ENCODE measurements at regions of chr10 and their contacts with region 1.

Region 1: DNA sequence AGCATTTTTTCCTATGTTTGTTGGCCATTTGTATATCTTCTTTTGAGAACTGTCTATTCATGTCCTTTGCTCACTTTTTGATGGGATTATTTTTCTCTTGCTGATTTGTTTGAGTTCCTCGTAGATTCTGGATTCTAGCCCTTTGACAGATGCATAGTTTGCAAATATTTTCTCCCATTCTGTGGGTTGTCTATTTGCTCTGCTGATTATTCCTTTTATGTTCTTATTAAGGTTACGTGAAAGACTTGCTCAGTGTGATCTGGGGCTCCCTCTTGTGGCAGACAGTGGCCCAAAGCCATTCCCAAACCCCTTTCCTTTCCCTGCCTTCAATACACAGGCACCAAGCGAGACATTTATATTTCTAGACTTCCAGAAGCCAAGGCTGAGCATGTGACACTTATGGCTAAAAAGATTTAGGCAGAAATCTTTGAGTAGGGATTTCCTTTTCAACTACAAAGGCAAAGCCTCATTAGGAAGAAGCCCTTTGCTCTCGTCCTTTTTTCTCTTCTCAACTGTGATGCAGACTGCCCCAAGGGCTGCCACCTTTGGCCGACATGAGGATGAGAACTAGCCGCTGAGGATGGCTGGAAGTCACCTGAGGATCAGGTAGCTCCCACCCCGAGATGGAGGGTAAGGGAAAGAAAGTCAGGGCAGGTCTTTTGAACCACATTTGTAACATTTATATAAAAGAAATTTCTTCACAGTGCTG is 23.6 kb downstream of the ST8SIA6 start:
- DNase-seq: peak; percentile 66 to 72 (median 71)
- ATAC-seq: peak in 3 of 4 donors; percentile 76 to 81 (median 81)
- H3K4me3 ChIP-seq: no peak overlapping the region
- H3K27ac ChIP-seq: peak overlapping the region in 1 of 12 donors; percentile 20
- H3K4me1 ChIP-seq: peaks cover 0 to 51% (median 16%) of the 10 kb centered on the region in 12 donors
- H3K27me3 ChIP-seq: peaks cover 0 to 5% (median 0%) of the 10 kb centered on the region in 9 donors
- CTCF ChIP-seq: peak; percentile 70 to 97 (median 87)
- POLR2A ChIP-seq: no peak

Region 2: GRCh38 chr10:15879058-15879457 is 1551.7 kb before region 1 on chr10:
- intact Hi-C with region 1: loop called in 1 of 10 experiments (anchors 5 kb)
- DNase-seq: no peak
- ATAC-seq: no peak
- H3K4me3 ChIP-seq: no peak overlapping the region
- H3K27ac ChIP-seq: no peak overlapping the region
- H3K4me1 ChIP-seq: peaks cover 0 to 3% (median 0%) of the 10 kb centered on the region in 12 donors
- H3K27me3 ChIP-seq: peaks cover 0 to 21% (median 0%) of the 10 kb centered on the region in 9 donors
- CTCF ChIP-seq: peak; percentile 38 to 68 (median 56)
- POLR2A ChIP-seq: no peak

Region 3: DNA sequence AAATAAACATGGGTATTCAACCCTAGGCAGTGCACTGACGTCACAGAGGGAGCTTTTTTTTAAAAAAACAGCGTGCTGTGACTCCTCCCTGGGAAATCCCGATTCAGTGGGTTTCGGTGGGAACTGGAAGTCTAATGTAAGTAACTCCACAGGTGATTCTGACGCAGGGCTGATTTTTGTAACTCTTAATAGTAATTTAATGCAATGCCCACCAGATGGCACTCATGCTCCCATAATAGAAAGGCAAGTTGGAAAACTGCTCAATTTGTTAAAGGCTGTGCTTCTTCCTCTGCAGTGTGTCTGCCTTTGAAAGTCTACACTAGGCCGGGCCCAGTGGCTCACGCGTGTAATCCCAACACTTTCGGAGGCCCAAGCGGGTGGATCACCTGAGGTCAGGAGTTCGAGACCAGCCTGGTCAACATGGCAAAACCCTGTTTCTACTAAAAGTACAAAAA is 602.7 kb before region 1 on chr10:
- intact Hi-C with region 1: loop called in 2 of 10 experiments (anchors 5 kb)
- DNase-seq: peak in 4 of 5 donors; percentile 46 to 55 (median 53)
- ATAC-seq: peak; percentile 74 to 82 (median 80)
- H3K4me3 ChIP-seq: peak overlapping the region in 5 of 12 donors; percentile 1 to 38 (median 17)
- H3K27ac ChIP-seq: peak overlapping the region in 10 of 12 donors; percentile 25 to 75 (median 49)
- H3K4me1 ChIP-seq: peaks cover 0 to 29% (median 13%) of the 10 kb centered on the region in 12 donors
- H3K27me3 ChIP-seq: no peaks in the 10 kb centered on the region
- CTCF ChIP-seq: peak; percentile 51 to 74 (median 64)
- POLR2A ChIP-seq: no peak

Region 4: GRCh38 chr10:16843252-16843870 is 587.4 kb before region 1 on chr10:
- intact Hi-C with region 1: loop called in 9 of 10 experiments (anchors 2 to 10 kb)
- DNase-seq: peak in 1 of 5 donors; percentile 19
- ATAC-seq: peak; percentile 45 to 61 (median 52)
- H3K4me3 ChIP-seq: no peak overlapping the region
- H3K27ac ChIP-seq: no peak overlapping the region
- H3K4me1 ChIP-seq: peaks cover 0 to 12% (median 0%) of the 10 kb centered on the region in 12 donors
- H3K27me3 ChIP-seq: no peaks in the 10 kb centered on the region
- CTCF ChIP-seq: peak; percentile 58 to 79 (median 68)
- POLR2A ChIP-seq: no peak

Region 5: DNA sequence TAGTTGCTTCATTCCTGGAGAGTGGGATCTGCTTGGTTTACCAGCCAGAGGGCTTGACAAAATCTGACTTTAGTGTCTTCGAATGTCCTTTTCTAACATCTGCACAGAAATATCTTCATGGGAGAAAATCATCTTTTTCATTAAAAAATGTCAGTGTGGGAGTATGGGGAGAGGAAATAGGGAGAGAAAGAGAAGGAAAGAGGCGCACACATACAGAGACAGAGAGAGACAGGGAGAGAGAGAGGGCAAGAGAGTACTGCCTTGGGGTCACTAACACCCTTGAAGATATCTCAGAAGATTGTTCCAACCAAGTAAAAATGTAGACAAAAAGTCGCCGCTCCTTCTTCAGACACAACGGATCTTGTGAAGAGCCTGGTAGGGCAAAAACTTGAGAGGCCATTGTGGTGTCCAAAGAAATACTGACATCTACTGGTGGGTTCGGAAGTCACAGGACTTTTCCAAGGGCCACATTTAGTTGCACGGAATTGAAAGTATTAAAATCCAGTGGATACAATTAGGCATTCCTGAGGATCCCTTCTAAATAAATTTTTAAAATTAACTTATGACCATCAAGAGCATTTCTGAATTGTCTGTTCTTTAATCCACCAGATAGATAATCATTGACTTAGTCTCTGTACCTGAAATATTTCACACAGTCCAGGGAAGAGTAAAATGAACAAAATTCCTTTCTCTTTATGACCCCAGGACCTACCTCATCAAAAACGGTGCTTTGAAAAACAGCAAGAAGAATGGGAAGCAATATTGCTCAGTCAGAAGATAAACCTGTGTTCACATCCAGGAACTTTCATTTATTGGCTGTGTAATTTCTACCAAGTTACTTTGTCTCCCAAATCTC is 173.1 kb before region 1 on chr10:
- intact Hi-C with region 1: loop called in 1 of 10 experiments (anchors 10 kb)
- DNase-seq: peak in 2 of 5 donors; percentile 49 to 50
- ATAC-seq: peak; percentile 73 to 87 (median 84)
- H3K4me3 ChIP-seq: peak overlapping the region in 5 of 12 donors; percentile 16 to 42 (median 24)
- H3K27ac ChIP-seq: peak overlapping the region in 1 of 12 donors; percentile 30
- H3K4me1 ChIP-seq: peaks cover 0 to 9% (median 0%) of the 10 kb centered on the region in 12 donors
- H3K27me3 ChIP-seq: no peaks in the 10 kb centered on the region
- CTCF ChIP-seq: peak; percentile 77 to 91 (median 85)
- POLR2A ChIP-seq: no peak

Region 6: DNA sequence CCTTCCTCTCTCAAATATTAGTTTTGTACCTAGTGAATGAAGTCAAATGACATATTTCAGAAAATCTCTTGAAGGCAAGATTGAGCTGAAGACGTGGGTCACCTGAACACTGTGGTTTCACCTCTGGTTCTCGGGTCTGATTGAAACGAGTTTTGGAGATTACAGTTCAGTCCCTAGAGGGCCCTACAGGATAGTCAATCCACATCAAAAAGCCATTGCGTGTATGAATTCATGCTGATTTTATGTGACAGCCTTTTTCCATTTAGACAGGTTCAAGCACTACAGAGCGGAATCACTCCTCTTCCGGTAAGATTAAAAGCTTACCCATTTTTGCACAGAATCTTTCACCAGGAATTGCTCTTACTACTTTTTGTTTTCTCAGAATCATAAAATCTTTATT is 140.6 kb before region 1 on chr10:
- intact Hi-C with region 1: loop called in 1 of 10 experiments (anchors 5 kb)
- DNase-seq: no peak
- ATAC-seq: no peak
- H3K4me3 ChIP-seq: no peak overlapping the region
- H3K27ac ChIP-seq: no peak overlapping the region
- H3K4me1 ChIP-seq: no peaks in the 10 kb centered on the region
- H3K27me3 ChIP-seq: peaks cover 0 to 4% (median 0%) of the 10 kb centered on the region in 9 donors
- CTCF ChIP-seq: peak in 4 of 12 donors; percentile 17 to 32 (median 26)
- POLR2A ChIP-seq: no peak

Region 7: DNA sequence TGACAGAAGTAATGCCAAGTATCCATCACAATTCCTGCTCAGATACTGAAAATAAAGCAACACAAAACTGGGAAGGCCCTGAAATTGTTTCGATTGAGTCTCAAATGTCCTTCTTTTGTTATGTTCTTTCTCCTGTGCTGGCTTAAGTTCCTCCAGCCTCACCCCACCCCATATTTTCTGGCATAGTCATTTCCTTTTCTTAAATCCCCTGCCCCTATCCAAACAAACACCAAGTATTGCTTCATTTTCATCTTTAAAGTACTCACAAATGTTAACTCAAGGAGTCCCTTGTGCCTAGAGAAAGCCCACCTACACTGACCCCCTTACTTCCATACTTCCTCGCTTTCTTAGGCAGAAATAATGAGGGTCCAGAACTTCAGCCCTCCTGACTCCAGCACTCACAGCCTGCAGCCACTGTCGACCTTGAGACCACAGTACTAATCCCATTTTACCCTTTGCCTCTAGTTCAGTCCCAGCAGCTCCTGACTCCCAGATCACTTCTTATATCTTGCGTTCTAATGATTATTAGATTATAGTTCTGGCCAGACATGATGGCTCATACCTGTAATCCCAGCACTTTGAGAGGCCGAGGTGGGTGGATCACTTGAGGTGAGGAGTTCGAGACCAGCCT is 96.8 kb after region 1 on chr10:
- intact Hi-C with region 1: loop called in 1 of 10 experiments (anchors 5 kb)
- DNase-seq: no peak
- ATAC-seq: peak in 2 of 4 donors; percentile 34 to 71
- H3K4me3 ChIP-seq: no peak overlapping the region
- H3K27ac ChIP-seq: peak overlapping the region in 7 of 12 donors; percentile 3 to 65 (median 39)
- H3K4me1 ChIP-seq: peaks cover 0 to 10% (median 0%) of the 10 kb centered on the region in 12 donors
- H3K27me3 ChIP-seq: no peaks in the 10 kb centered on the region
- CTCF ChIP-seq: no peak
- POLR2A ChIP-seq: no peak

Region 8: DNA sequence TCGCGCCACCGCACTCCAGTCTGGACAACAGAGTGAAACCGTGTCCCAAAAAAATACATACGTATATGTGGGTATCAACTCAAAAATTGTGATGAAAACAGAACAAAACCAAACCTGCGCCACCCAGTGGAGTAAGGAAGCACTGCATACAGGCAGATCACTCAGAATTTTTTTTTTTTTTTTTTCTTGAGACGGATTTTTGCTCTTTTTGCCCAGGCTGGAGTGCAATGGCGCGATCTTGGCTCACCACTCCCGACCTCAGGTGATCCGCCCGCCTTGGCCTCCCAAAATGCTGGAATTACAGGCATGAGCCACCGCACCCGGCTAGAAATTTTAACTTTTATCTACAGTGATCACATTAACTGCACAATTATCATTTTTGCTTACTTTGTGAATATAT is 312.1 kb after region 1 on chr10:
- intact Hi-C with region 1: no loop called
- DNase-seq: peak; percentile 29 to 70 (median 56)
- ATAC-seq: no peak
- H3K4me3 ChIP-seq: peak overlapping the region in 2 of 12 donors; percentile 21 to 24
- H3K27ac ChIP-seq: no peak overlapping the region
- H3K4me1 ChIP-seq: peaks cover 0 to 29% (median 4%) of the 10 kb centered on the region in 12 donors
- H3K27me3 ChIP-seq: no peaks in the 10 kb centered on the region
- CTCF ChIP-seq: peak; percentile 72 to 89 (median 86)
- POLR2A ChIP-seq: no peak